Mammary epithelial cell (primary cell): ENCODE measurements at regions of chr15 and their contacts with region 1.

Region 1: DNA sequence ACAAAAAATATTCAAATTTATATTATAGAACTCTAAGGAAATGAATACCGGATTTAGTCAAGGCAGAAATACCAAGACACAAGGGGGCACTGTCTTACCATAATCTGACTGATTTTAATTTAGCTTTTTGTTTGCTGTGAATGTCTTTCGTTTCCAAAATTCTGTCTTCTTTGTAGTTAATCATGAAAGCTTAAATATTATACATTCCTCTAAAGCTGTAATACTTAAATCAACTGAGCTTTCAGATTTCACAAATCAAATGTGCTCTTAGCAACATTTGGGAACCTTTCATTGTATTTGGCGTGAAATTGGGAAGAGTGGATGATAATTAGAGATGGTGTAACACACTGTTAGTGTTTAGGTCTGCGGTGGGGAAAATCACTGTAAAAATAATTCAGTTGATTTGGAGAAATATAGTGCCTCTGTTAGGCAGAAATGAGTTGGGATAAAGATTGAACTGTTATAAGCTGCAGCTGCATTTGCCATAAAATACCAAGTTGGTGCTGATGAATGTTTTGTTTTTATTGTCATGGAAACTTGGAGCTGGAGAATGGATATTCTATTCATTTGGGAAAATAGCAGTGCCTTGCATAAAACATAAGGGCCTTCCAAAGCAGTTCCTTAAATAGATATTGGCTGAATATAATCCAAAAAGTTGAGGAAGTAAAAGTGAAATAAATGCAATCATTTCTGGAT is 228.2 kb downstream of the TCF12 start:
- DNase-seq: peak; percentile 29
- H3K4me3 ChIP-seq: no peak overlapping the region
- H3K27ac ChIP-seq: peak overlapping the region; percentile 52
- H3K4me1 ChIP-seq: peaks cover 31% of the 10 kb centered on the region
- H3K27me3 ChIP-seq: no peaks in the 10 kb centered on the region
- CTCF ChIP-seq: peak; percentile 48 to 66

Region 2: DNA sequence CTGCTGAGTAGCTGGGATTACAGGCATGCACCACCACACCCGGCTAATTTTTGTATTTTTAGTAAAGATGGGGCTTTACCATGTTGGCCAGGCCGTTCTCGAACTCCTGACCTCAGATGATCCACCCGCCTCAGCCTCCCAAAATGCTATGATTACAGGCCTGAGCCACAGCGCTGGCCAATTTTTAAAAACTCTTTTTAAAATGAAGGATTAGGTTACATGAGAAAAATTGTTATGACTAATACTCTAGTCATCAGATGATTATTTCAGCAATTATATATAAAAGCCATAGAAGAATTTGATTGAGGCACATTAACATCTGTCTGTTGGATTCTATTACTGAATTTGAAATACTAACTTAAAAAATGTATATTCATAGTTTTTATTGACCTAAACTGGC is 547.7 kb before region 1 on chr15:
- CTCF ChIA-PET with region 1: no interaction called
- dilution Hi-C with region 1: no loop called
- in situ Hi-C with region 1: no loop called
- intact Hi-C with region 1: no loop called
- DNase-seq: peak; percentile 35
- H3K4me3 ChIP-seq: no peak overlapping the region
- H3K27ac ChIP-seq: no peak overlapping the region
- H3K4me1 ChIP-seq: peaks cover 3% of the 10 kb centered on the region
- H3K27me3 ChIP-seq: no peaks in the 10 kb centered on the region
- CTCF ChIP-seq: no peak

Region 3: DNA sequence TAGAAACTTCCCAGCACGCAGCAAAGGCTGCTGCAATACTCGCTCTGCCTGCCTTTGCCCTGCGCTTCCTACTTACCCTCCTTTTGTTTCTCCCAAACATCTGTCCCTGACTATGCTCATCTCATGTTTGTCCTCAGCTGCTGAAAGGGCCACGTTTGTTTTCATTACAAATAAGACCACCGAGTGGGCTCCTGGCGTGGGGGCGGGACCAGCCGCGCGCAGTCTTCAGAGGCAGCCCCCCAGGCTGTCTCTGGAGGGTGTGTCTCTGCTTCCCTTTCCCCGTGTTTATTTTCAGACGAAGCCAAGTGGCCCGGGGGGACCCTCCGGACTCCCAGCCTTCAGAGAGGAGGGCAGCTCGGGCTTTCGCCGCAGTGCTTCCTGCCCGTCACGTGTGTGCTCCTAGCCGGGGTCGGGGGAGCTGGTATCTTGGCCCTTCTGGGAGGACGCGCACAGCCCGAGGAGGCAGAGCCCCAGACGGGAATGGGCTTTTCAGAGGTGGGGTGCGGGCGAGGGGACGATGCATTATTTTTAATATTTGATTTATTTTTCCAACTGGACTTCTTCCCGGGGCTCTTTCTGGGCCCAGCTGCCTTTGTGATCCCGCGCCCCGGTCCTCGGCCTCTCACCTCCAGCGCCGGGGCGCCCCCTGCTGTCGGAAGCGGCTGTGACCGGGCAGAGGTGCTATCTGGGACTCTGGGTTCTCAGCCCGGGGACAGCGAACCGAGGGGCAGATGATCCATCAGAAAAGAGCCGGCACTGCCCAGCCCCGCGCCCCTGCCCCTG is 159.7 kb after region 1 on chr15:
- CTCF ChIA-PET with region 1: interaction called, 9 read pairs
- dilution Hi-C with region 1: no loop called
- in situ Hi-C with region 1: loop called (anchors 5 to 10 kb)
- intact Hi-C with region 1: loop called (anchors 1 kb)
- DNase-seq: peak; percentile 42
- H3K4me3 ChIP-seq: peak overlapping the region; percentile 39 to 53 (median 46)
- H3K27ac ChIP-seq: no peak overlapping the region
- H3K4me1 ChIP-seq: peaks cover 12% of the 10 kb centered on the region
- H3K27me3 ChIP-seq: no peaks in the 10 kb centered on the region
- CTCF ChIP-seq: peak; percentile 55 to 91

Region 4: DNA sequence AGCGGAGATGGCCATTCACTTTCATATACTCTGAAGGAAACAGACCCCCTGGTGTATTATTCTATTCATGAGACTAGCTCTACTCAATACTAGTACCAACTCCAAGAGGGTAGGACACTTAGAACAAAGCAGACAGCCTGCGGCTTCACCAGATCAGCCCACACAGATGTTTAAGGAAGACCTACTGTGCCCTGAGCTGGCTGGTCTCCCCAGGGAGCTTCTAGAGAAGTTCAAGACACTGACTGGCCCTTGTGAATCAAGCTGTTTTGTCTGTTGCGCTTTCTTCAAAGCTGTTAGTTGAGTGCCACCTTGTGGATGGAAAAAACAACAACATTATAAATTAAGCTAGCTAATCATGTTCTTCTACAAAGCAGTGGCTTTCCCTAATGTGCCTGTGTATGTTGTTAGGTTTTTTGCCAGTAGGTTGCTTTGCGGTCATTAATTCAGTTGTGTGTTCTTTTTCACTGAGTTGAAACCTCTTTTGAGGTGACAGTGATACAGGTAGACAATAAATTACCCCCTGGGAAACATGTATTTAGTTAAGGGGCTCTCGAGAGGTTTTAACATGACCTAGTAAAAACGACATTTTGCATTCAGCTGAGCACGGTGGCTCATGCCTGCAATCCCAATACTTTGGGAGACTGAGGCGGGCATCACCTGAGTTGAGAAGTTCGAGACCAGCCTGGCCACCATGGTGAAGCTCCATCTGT is 380.9 kb after region 1 on chr15:
- CTCF ChIA-PET with region 1: no interaction called
- dilution Hi-C with region 1: no loop called
- in situ Hi-C with region 1: loop called in 1 of 2 experiments (anchors 25 kb)
- intact Hi-C with region 1: loop called (anchors 5 kb)
- DNase-seq: peak; percentile 68
- H3K4me3 ChIP-seq: no peak overlapping the region
- H3K27ac ChIP-seq: no peak overlapping the region
- H3K4me1 ChIP-seq: no peaks in the 10 kb centered on the region
- H3K27me3 ChIP-seq: no peaks in the 10 kb centered on the region
- CTCF ChIP-seq: peak; percentile 46 to 63